Activated CD4-positive, alpha-beta memory T cell treated with anti-CD3 and anti-CD28 coated beads for 36 hours (primary cell): ENCODE measurements at regions of chr12 and their contacts with region 1.

Region 1: GRCh38 chr12:94207849-94208621 is 59.7 kb downstream of the PLXNC1 start:
- DNase-seq: peak; percentile 70
- H3K4me3 Mint-ChIP-seq: peak overlapping the region; percentile 71
- H3K27ac Mint-ChIP-seq: peak overlapping the region; percentile 97
- H3K4me1 Mint-ChIP-seq: peaks cover 60% of the 10 kb centered on the region
- H3K27me3 Mint-ChIP-seq: no peaks in the 10 kb centered on the region

Region 2: DNA sequence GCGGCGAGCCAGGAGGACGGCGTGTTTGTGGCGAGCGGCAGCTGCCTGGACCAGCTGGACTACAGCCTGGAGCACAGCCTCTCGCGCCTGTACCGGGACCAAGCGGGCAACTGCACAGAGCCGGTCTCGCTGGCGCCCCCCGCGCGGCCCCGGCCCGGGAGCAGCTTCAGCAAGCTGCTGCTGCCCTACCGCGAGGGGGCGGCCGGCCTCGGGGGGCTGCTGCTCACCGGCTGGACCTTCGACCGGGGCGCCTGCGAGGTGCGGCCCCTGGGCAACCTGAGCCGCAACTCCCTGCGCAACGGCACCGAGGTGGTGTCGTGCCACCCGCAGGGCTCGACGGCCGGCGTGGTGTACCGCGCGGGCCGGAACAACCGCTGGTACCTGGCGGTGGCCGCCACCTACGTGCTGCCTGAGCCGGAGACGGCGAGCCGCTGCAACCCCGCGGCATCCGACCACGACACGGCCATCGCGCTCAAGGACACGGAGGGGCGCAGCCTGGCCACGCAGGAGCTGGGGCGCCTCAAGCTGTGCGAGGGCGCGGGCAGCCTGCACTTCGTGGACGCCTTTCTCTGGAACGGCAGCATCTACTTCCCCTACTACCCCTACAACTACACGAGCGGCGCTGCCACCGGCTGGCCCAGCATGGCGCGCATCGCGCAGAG is 58.8 kb before region 1 on chr12:
- CTCF ChIA-PET with region 1: interaction called, 14 read pairs
- POLR2A ChIA-PET with region 1: interaction called, 6 read pairs
- intact Hi-C with region 1: loop called (anchors 1 kb)
- DNase-seq: peak; percentile 54
- H3K4me3 Mint-ChIP-seq: peak overlapping the region; percentile 82
- H3K27ac Mint-ChIP-seq: no peak overlapping the region
- H3K4me1 Mint-ChIP-seq: peaks cover 19% of the 10 kb centered on the region
- H3K27me3 Mint-ChIP-seq: peaks cover 11% of the 10 kb centered on the region

Region 3: GRCh38 chr12:94244165-94245133 is 36.4 kb after region 1 on chr12:
- CTCF ChIA-PET with region 1: interaction called, 3 read pairs
- POLR2A ChIA-PET with region 1: no interaction called
- intact Hi-C with region 1: loop called (anchors 1 kb)
- DNase-seq: peak; percentile 74
- H3K4me3 Mint-ChIP-seq: no peak overlapping the region
- H3K27ac Mint-ChIP-seq: peak overlapping the region; percentile 72
- H3K4me1 Mint-ChIP-seq: peaks cover 19% of the 10 kb centered on the region
- H3K27me3 Mint-ChIP-seq: no peaks in the 10 kb centered on the region

Region 4: GRCh38 chr12:94305130-94305957 is 97.3 kb after region 1 on chr12:
- CTCF ChIA-PET with region 1: interaction called, 3 read pairs
- POLR2A ChIA-PET with region 1: interaction called, 6 read pairs
- intact Hi-C with region 1: loop called (anchors 1 kb)
- DNase-seq: peak; percentile 70
- H3K4me3 Mint-ChIP-seq: no peak overlapping the region
- H3K27ac Mint-ChIP-seq: peak overlapping the region; percentile 61
- H3K4me1 Mint-ChIP-seq: peaks cover 39% of the 10 kb centered on the region
- H3K27me3 Mint-ChIP-seq: no peaks in the 10 kb centered on the region

Region 5: GRCh38 chr12:94353130-94353529 is 145.1 kb after region 1 on chr12:
- CTCF ChIA-PET with region 1: no interaction called
- POLR2A ChIA-PET with region 1: no interaction called
- intact Hi-C with region 1: no loop called
- DNase-seq: no peak
- H3K4me3 Mint-ChIP-seq: no peak overlapping the region
- H3K27ac Mint-ChIP-seq: no peak overlapping the region
- H3K4me1 Mint-ChIP-seq: peaks cover 6% of the 10 kb centered on the region
- H3K27me3 Mint-ChIP-seq: no peaks in the 10 kb centered on the region

Region 6: GRCh38 chr12:94427501-94428381 is 219.7 kb after region 1 on chr12:
- CTCF ChIA-PET with region 1: no interaction called
- POLR2A ChIA-PET with region 1: no interaction called
- intact Hi-C with region 1: loop called (anchors 1 kb)
- DNase-seq: peak; percentile 16
- H3K4me3 Mint-ChIP-seq: no peak overlapping the region
- H3K27ac Mint-ChIP-seq: peak overlapping the region; percentile 54
- H3K4me1 Mint-ChIP-seq: peaks cover 29% of the 10 kb centered on the region
- H3K27me3 Mint-ChIP-seq: no peaks in the 10 kb centered on the region

Region 7: DNA sequence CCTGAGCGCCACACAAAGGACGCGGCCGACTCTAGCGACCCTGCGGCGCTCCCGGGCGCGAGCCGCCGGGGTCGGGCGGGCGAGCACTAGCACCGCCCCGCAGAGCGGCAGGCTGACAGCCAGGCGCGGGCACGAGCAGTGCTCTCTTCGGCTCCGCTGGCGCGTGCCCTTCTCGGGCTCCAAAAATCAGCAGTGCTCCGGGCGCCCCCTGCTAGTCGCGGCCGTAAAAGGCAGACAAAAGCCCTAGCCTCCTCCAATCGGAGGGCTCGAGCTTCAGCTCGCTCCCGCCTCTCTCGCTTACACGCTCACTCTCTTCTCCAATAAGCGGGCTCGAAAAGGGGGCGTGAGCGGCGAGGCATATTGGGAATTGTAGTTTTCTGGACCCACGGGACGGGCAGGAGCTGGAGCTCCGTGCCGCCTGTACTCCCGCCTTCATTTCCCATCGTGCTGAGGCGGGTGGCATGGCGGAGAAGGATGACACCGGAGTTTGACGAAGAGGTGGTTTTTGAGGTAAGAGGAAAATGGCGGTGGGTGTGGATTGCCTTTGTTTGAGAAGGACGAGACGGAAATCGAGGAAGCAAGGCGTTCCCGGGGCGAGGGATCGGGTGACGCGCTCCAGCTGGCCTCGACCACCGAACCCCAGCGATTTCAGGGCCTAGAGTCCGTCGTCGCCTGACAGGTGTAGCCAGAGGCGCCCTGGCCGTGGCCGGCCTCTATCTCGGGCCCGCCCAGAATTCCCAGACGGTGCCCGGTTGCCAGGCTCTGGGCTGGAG is 1009.5 kb after region 1 on chr12 and contains the starts of genes FGD6 and VEZT:
- CTCF ChIA-PET with region 1: no interaction called
- POLR2A ChIA-PET with region 1: no interaction called
- intact Hi-C with region 1: loop called (anchors 5 kb)
- DNase-seq: peak; percentile 99
- H3K4me3 Mint-ChIP-seq: peak within 1 kb of the TSS; percentile 89
- H3K27ac Mint-ChIP-seq: peak within 1 kb of the TSS; percentile 95
- H3K4me1 Mint-ChIP-seq: peaks cover 35% of the 10 kb centered on the region
- H3K27me3 Mint-ChIP-seq: no peaks in the 10 kb centered on the region
- total RNA-seq, gene FGD6: 0.78 to 1.1 TPM
- total RNA-seq, gene VEZT: 50.7 to 54.4 TPM